K562 (cell line): ENCODE measurements at regions of chr16 and their contacts with region 1.

Region 1: DNA sequence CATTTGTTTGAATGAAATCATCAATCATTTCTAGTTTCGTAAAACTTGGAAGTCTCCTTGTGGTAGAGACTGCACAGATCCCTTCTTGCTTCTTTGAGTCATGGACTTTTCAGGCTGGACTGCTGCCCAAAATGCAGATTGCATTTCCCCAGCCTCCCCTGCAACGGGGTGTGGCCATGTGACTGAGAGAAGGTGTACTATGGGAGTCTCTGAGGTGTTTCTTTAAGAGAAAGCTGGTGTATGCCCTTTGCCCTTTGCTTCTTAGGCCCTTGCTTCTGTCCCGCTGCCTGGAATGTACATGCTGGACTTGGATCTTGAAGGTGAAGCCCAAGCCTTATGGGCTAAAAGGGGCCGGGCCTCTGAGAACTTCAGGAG is 51.6 kb downstream of the FTO start:
- DNase-seq: peak in 2 of 4 experiments; percentile 22 to 58
- ATAC-seq: peak; percentile 76
- H3K4me3 ChIP-seq: no peak overlapping the region
- H3K27ac ChIP-seq: no peak overlapping the region
- H3K4me1 ChIP-seq: no peaks in the 10 kb centered on the region; a peak in 1 of 5 replicates
- H3K27me3 ChIP-seq: no peaks in the 10 kb centered on the region
- CTCF ChIP-seq: no peak
- EP300 ChIP-seq: no peak
- POLR2A ChIP-seq: no peak
- RAD21 ChIP-seq: no peak

Region 2: DNA sequence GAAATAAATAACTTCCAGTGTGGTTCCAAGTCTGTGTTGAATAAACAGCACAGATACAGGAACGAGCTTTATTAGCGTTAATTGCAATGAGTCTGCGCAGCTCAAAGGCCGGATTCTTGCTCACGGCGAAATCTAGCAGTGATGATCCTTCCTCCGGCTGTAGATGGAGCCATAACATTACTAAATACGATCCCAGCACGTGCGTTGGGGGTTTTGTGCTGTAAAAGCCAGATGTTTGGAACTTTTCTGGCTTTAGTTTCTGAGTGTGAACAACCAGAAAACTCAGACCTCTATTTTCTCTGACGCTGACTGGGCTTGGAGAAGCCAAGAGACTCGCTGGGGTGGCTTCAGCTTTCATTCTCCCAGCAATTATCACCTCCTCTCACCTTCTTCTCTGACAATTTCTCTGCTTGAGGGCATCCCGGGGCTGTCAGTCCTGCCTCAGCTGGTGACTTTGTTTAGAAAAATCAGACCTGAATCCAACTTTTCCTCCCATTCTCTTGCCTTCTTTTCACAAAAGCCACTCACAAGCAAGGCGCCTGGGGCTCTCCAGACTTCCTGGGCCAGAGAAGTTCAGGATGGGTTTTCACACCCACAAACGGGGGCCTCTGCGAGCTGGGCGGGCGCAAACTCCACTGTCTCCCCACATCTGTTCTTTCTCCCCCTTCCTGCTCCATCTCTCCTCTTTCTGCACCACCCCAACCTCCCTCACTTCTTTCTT is 205.4 kb before region 1 on chr16:
- CTCF ChIA-PET with region 1: no interaction called
- POLR2A ChIA-PET with region 1: no interaction called
- in situ Hi-C with region 1: no loop called
- intact Hi-C with region 1: loop called (anchors 10 kb)
- DNase-seq: peak; percentile 48 to 66 (median 58)
- ATAC-seq: peak; percentile 89
- H3K4me3 ChIP-seq: no peak overlapping the region
- H3K27ac ChIP-seq: no peak overlapping the region
- H3K4me1 ChIP-seq: no peaks in the 10 kb centered on the region
- H3K27me3 ChIP-seq: peaks cover 25 to 34% of the 10 kb centered on the region in 2 experiments
- CTCF ChIP-seq: peak; percentile 59 to 77 (median 72)
- EP300 ChIP-seq: no peak
- POLR2A ChIP-seq: no peak
- RAD21 ChIP-seq: peak; percentile 69 to 79